ENCODE measurements at regions of chr19 and their contacts with region 1.

Region 1: DNA sequence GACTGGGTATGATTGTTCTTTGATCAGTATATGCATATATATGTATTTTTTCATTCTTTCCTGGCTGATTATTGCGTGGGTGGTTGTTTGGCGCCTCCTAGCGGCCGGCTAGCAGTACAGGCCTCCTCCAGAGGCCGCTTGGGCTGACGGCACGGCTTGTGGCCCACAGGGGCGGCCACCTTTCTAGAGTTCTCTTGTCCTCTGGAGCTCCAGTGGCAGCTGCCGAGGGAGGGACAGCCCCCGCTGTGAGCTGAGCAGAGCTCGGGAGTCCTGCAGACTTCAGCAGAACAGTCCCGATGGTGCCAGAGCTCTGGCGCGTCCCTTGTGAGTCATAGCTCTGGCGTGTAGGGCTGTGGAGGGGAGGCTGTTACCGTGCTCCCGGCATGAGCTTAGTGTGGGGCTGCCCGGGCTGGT is 22.5 kb upstream of the ZNF429 start:
- DNase-seq: peak; percentile 49 to 86 (median 60)
- ATAC-seq: peak; percentile 79
- H3K4me3 ChIP-seq: peak overlapping the region; percentile 46
- H3K4me3 Mint-ChIP-seq: no peak overlapping the region
- H3K27ac ChIP-seq: no peak overlapping the region
- H3K27ac Mint-ChIP-seq: no peak overlapping the region
- H3K4me1 ChIP-seq: no peaks in the 10 kb centered on the region
- H3K4me1 Mint-ChIP-seq: no peaks in the 10 kb centered on the region
- H3K27me3 ChIP-seq: no peaks in the 10 kb centered on the region
- H3K27me3 Mint-ChIP-seq: no peaks in the 10 kb centered on the region
- CTCF ChIP-seq: peak; percentile 82

Region 2: DNA sequence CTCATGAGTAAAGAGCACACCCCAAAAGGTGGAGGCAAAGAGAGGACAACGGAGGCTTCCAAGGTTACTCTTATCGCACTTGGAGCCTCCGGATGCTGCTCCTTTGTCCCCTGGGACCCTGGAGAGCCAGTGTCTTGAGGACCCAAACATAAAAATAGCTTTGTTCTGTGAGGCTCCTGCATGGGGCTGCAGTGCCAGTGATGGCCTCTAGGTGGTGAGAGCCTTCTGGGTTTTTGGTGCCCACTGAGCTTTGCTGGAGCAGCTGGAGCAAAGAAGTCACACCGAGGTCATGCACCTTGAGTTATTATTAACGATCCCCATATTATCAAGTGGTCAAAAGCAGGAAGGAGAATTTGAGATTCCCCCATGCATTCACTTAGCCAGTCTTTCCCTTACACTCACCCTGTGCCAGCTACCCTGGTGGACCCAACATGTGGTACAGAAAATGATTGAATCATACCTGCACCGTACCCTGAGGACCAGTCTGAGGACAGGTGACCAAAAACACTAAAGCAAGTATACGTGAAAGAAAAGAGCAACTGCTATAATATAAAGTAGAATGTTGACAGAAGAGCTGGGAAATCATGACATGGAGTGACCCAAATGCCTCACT is 1485.1 kb before region 1 on chr19:
- CTCF ChIA-PET with region 1: no interaction called
- POLR2A ChIA-PET with region 1: no interaction called
- intact Hi-C with region 1: loop called in 1 of 2 experiments (anchors 5 kb)
- DNase-seq: peak; percentile 10 to 65 (median 27)
- ATAC-seq: peak; percentile 55
- H3K4me3 ChIP-seq: no peak overlapping the region
- H3K4me3 Mint-ChIP-seq: no peak overlapping the region
- H3K27ac ChIP-seq: no peak overlapping the region
- H3K27ac Mint-ChIP-seq: no peak overlapping the region
- H3K4me1 ChIP-seq: no peaks in the 10 kb centered on the region
- H3K4me1 Mint-ChIP-seq: no peaks in the 10 kb centered on the region
- H3K27me3 ChIP-seq: no peaks in the 10 kb centered on the region
- H3K27me3 Mint-ChIP-seq: no peaks in the 10 kb centered on the region
- CTCF ChIP-seq: peak; percentile 70

Region 3: GRCh38 chr19:20247016-20247683 is 1235.7 kb before region 1 on chr19:
- CTCF ChIA-PET with region 1: no interaction called
- POLR2A ChIA-PET with region 1: no interaction called
- intact Hi-C with region 1: loop called (anchors 2 to 5 kb)
- DNase-seq: peak in 13 of 14 experiments; percentile 11 to 58 (median 27)
- ATAC-seq: no peak
- H3K4me3 ChIP-seq: no peak overlapping the region
- H3K4me3 Mint-ChIP-seq: no peak overlapping the region
- H3K27ac ChIP-seq: no peak overlapping the region
- H3K27ac Mint-ChIP-seq: no peak overlapping the region
- H3K4me1 ChIP-seq: peaks cover 5% of the 10 kb centered on the region
- H3K4me1 Mint-ChIP-seq: peaks cover 5% of the 10 kb centered on the region
- H3K27me3 ChIP-seq: no peaks in the 10 kb centered on the region
- H3K27me3 Mint-ChIP-seq: no peaks in the 10 kb centered on the region
- CTCF ChIP-seq: peak; percentile 50

Region 4: DNA sequence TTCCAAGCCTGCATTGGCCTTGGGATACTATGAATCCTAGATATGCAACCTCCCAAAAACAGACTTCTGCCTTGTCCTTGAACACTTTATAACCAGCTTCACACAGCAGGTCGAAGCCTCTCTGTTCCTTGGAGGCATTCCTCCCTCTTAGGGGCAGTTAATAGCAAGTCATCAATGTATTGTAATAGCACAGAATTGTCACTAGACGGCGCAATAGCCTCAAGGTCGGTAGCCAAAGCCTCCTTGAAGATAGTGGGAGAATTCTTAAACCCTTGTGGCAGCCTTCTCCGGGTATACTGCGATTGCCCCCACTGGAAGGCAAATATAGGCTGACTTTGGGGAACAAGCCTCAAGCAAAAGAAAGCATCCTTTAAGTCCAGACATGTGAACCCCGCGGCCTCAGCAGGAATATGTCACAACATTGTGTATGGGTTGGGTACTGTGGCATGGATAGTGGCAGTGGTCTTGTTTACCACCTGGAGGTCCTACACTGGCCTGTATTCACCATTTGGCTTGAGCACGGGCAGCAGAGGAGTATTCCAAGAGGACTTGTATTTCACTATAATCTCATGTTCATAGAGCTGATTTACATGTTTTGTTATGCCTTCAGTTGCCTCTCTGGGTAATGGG is 279.9 kb before region 1 on chr19:
- CTCF ChIA-PET with region 1: interaction called, 4 read pairs
- POLR2A ChIA-PET with region 1: no interaction called
- intact Hi-C with region 1: loop called (anchors 1 kb)
- DNase-seq: peak in 6 of 14 experiments; percentile 15 to 74 (median 40)
- ATAC-seq: no peak
- H3K4me3 ChIP-seq: no peak overlapping the region
- H3K4me3 Mint-ChIP-seq: no peak overlapping the region
- H3K27ac ChIP-seq: no peak overlapping the region
- H3K27ac Mint-ChIP-seq: no peak overlapping the region
- H3K4me1 ChIP-seq: no peaks in the 10 kb centered on the region
- H3K4me1 Mint-ChIP-seq: no peaks in the 10 kb centered on the region
- H3K27me3 ChIP-seq: no peaks in the 10 kb centered on the region
- H3K27me3 Mint-ChIP-seq: peaks cover 5% of the 10 kb centered on the region
- CTCF ChIP-seq: peak; percentile 75

Region 5: DNA sequence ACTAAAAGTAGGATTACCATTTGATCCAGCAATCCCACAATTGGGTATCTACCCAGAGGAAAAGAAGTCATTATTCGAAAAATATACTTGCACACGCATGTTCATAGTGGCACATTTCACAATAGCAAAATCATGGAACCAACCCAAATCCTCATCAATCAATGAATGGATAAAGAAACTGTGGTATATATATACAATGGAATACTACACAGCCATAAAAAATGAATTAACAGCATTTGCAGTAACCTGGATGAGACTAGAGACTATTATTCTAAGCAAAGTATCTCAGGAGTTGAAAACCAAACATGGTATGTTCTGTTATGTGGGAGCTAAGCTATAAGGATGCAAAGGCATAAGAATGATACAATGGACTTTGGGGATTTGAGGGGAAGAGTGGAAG is 156.7 kb before region 1 on chr19:
- CTCF ChIA-PET with region 1: no interaction called
- POLR2A ChIA-PET with region 1: no interaction called
- intact Hi-C with region 1: no loop called
- DNase-seq: no peak
- ATAC-seq: no peak
- H3K4me3 ChIP-seq: no peak overlapping the region
- H3K4me3 Mint-ChIP-seq: peak overlapping the region; percentile 74
- H3K27ac ChIP-seq: no peak overlapping the region
- H3K27ac Mint-ChIP-seq: peak overlapping the region; percentile 2
- H3K4me1 ChIP-seq: peaks cover 28% of the 10 kb centered on the region
- H3K4me1 Mint-ChIP-seq: peaks cover 77% of the 10 kb centered on the region
- H3K27me3 ChIP-seq: no peaks in the 10 kb centered on the region
- H3K27me3 Mint-ChIP-seq: no peaks in the 10 kb centered on the region
- CTCF ChIP-seq: no peak

Region 6: GRCh38 chr19:21698215-21698614 is 215.3 kb after region 1 on chr19:
- CTCF ChIA-PET with region 1: no interaction called
- POLR2A ChIA-PET with region 1: no interaction called
- intact Hi-C with region 1: loop called (anchors 2 kb)
- DNase-seq: peak in 4 of 14 experiments; percentile 5 to 61 (median 42)
- ATAC-seq: peak; percentile 66
- H3K4me3 ChIP-seq: no peak overlapping the region
- H3K4me3 Mint-ChIP-seq: no peak overlapping the region
- H3K27ac ChIP-seq: no peak overlapping the region
- H3K27ac Mint-ChIP-seq: no peak overlapping the region
- H3K4me1 ChIP-seq: no peaks in the 10 kb centered on the region
- H3K4me1 Mint-ChIP-seq: no peaks in the 10 kb centered on the region
- H3K27me3 ChIP-seq: no peaks in the 10 kb centered on the region
- H3K27me3 Mint-ChIP-seq: no peaks in the 10 kb centered on the region
- CTCF ChIP-seq: peak; percentile 76

Measured in CD4-positive, alpha-beta T cell (primary cell).